Right lobe of liver (tissue), 6 donors: ENCODE measurements at regions of chr4 and their contacts with region 1.

Region 1: GRCh38 chr4:13535708-13536361 is 8.5 kb downstream of the NKX3-2 start:
- DNase-seq: no peak
- ATAC-seq: no peak
- H3K4me3 ChIP-seq: no peak overlapping the region
- H3K27ac ChIP-seq: no peak overlapping the region
- H3K4me1 ChIP-seq: peaks cover 0 to 9% (median 2%) of the 10 kb centered on the region in 4 donors
- H3K27me3 ChIP-seq: peaks cover 25 to 54% of the 10 kb centered on the region in 2 donors
- CTCF ChIP-seq: no peak
- POLR2A ChIP-seq: no peak

Region 2: DNA sequence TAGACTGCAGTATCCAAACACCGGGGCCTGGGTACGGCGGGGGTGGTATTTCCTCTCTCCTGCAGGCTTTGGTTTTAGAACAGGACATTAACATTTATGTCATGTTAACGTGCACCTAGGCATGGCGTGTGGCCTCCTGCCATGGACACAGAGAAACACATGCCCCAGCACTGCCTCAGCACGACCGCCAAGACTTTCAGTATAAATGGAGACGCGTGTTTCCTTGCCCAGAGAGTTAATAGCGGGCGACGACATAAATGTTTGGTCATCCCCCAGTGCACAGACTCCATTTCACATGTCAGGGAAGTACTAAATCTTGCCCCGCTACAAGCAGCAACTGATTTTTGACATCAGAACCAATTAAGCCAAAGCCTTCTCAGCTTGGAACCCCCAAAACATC is 789.6 kb before region 1 on chr4:
- intact Hi-C with region 1: loop called in 1 of 2 experiments (anchors 10 kb)
- DNase-seq: no peak
- ATAC-seq: no peak
- H3K4me3 ChIP-seq: no peak overlapping the region
- H3K27ac ChIP-seq: no peak overlapping the region
- H3K4me1 ChIP-seq: no peaks in the 10 kb centered on the region
- H3K27me3 ChIP-seq: no peaks in the 10 kb centered on the region
- CTCF ChIP-seq: no peak
- POLR2A ChIP-seq: no peak

Region 3: GRCh38 chr4:13248621-13249298 is 287.1 kb before region 1 on chr4:
- intact Hi-C with region 1: no loop called
- DNase-seq: no peak
- ATAC-seq: no peak
- H3K4me3 ChIP-seq: no peak overlapping the region
- H3K27ac ChIP-seq: no peak overlapping the region
- H3K4me1 ChIP-seq: no peaks in the 10 kb centered on the region
- H3K27me3 ChIP-seq: no peaks in the 10 kb centered on the region
- CTCF ChIP-seq: peak; percentile 24 to 49 (median 32)
- POLR2A ChIP-seq: no peak

Region 4: DNA sequence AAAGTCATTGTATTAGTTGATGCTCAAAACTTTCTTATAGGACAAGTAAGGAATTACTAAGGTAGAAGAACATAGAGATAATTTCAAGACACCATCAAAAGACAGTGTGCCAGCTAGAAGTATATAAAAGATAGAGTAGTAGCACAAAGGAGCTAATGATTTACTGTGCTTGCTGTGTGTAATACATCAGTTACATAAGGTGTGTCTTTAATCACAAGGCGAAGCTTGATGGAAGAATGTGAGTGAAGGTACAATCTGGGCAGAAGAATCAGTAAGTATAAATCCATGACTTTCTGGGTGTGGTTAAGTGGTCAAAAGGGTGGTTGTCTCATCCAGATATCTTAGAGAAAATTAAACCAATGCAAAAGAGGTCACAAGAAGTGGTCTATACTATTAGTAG is 186.8 kb after region 1 on chr4:
- intact Hi-C with region 1: no loop called
- DNase-seq: no peak
- ATAC-seq: no peak
- H3K4me3 ChIP-seq: no peak overlapping the region
- H3K27ac ChIP-seq: no peak overlapping the region
- H3K4me1 ChIP-seq: no peaks in the 10 kb centered on the region
- H3K27me3 ChIP-seq: no peaks in the 10 kb centered on the region
- CTCF ChIP-seq: no peak
- POLR2A ChIP-seq: no peak